ENCODE measurements at regions of chr3 and their contacts with region 1.

Region 1: GRCh38 chr3:48465531-48466378 is 19.2 kb downstream of the ATRIP start:
- DNase-seq: peak; percentile 97
- H3K4me3 ChIP-seq: peak overlapping the region; percentile 57
- CTCF ChIP-seq: peak; percentile 72

Region 2: DNA sequence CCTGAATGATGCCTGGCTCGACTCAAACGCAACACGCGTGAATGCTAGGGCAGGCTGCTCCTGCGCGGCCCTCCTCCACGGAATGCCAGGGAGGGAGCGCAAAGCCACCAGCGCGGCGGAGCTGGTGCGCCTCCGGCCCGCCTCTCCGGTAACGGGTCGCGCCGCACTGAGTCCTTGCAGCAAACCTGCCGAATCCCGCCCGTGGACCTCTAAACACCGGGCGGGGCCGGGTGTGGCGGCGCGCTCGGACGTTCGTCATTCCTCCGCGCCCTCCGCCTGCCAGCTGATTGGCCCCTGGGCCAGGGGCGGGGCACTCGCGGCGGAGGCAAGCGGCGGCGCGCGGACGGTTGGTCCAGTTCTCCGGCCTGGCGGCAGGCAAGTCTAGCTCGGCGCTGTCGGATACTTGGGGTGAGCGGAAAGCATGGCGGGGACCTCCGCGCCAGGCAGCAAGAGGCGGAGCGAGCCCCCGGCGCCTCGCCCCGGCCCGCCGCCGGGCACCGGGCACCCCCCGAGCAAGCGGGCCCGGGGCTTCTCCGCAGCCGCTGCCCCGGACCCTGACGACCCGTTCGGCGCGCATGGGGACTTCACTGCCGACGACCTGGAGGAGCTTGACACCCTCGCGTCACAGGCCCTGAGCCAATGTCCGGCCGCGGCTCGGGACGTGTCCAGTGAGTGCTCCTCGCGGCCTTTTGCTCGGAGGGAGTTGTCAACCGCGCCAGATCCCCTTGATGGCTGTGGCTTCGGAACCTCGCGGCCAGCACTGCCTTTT is 19.1 kb before region 1 on chr3 and contains the start of gene ATRIP:
- CTCF ChIA-PET with region 1: interaction called, 14 read pairs
- POLR2A ChIA-PET with region 1: interaction called, 3 read pairs
- DNase-seq: no peak
- H3K4me3 ChIP-seq: peak within 1 kb of the TSS; percentile 97
- CTCF ChIP-seq: no peak

Region 3: DNA sequence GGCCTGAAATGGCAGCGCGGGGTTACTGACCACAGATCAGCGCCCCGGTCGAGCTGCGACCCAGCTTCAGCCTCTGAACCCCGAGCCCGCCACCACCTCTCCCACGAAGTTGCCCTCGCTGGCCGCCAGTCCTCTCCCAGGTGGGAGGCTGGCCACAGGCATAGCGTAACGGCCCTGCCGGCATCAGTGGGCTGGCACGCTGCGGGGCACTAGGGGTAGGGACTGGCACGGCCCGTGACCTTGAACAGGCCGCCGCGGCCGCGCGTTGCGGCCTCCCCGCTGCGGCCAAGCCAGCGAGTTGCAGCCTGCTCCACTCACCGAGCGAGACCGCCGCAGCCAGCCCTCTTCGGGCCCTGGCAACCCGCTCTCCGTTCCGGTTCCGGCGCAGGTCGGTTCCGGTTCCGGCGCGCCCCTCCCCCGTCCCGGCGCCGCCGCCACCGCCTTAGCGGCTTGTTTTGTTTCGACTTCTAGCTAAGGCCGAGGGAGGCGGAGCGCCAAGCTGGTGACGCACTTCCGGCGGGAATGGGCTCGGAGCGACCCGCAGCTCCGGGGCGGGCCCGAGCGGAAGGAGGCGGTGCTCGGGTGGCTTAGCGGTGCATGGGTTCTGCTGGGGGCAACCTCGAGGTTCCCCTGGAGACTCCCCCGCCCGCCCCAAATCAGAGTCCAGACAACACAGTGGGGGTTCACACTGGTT is 654.8 kb after region 1 on chr3 and contains the start of gene USP19:
- CTCF ChIA-PET with region 1: no interaction called
- POLR2A ChIA-PET with region 1: no interaction called
- DNase-seq: no peak
- H3K4me3 ChIP-seq: peak within 1 kb of the TSS; percentile 96
- CTCF ChIP-seq: no peak